Activated CD4-positive, alpha-beta T cell treated with anti-CD3 and anti-CD28 coated beads for 36 hours (primary cell): ENCODE measurements at regions of chrX and their contacts with region 1.

Region 1: DNA sequence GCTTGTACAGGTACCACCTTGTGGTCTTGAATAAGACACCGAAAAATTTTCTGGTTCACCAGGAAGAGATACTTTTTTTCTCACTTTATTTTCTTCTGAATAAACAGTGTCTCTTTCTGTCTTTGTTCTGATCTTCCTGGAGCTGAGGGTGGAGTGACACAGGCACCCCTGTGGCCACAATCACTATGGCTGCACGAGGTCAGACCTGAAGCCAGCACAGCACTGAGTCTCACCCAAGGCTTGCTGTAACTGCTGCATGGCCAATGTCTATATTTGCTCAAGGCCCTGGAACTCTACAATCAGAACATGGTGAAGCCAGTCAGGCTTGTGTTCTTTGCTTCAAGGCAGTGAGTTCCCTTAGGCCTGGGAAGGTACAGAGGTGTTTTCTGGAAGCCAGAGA is 87.2 kb downstream of the GPR174 start:
- DNase-seq: no peak
- ATAC-seq: no peak
- H3K4me3 Mint-ChIP-seq: no peak overlapping the region
- H3K27ac Mint-ChIP-seq: peak overlapping the region; percentile 81
- H3K4me1 Mint-ChIP-seq: peaks cover 45% of the 10 kb centered on the region
- H3K27me3 Mint-ChIP-seq: no peaks in the 10 kb centered on the region

Region 2: DNA sequence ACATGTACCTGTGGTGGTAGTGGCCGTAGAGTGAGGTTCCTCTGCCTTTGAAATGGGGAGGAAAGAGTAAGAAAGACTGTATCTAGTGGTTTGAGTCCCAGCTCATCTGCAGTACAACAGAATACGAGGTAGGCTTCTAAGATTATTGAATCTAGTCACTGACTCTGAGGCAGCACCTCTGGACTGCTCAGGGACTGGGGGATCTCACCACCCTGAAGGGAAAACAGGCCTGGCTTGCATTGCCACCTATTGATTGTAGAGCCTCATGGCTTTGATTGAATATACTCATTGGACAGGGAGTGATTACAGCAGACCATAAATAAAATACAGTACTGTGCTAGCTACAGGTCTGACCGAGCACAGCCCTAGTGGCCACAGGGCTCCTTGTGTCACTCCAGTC is 36.6 kb before region 1 on chrX:
- CTCF ChIA-PET with region 1: no interaction called
- POLR2A ChIA-PET with region 1: no interaction called
- intact Hi-C with region 1: loop called in 1 of 2 experiments (anchors 5 kb)
- DNase-seq: peak; percentile 14
- ATAC-seq: no peak
- H3K4me3 Mint-ChIP-seq: no peak overlapping the region
- H3K27ac Mint-ChIP-seq: no peak overlapping the region
- H3K4me1 Mint-ChIP-seq: peaks cover 9% of the 10 kb centered on the region
- H3K27me3 Mint-ChIP-seq: no peaks in the 10 kb centered on the region